ENCODE measurements at regions of chr19 and their contacts with region 1.

Region 1: GRCh38 chr19:35013031-35013819 is 13.1 kb downstream of the GRAMD1A start:
- DNase-seq: peak; percentile 82
- ATAC-seq: peak; percentile 67
- H3K4me3 Mint-ChIP-seq: peak overlapping the region; percentile 56
- H3K27ac Mint-ChIP-seq: peak overlapping the region; percentile 83
- H3K4me1 Mint-ChIP-seq: peaks cover 65% of the 10 kb centered on the region
- H3K27me3 Mint-ChIP-seq: no peaks in the 10 kb centered on the region

Region 2: DNA sequence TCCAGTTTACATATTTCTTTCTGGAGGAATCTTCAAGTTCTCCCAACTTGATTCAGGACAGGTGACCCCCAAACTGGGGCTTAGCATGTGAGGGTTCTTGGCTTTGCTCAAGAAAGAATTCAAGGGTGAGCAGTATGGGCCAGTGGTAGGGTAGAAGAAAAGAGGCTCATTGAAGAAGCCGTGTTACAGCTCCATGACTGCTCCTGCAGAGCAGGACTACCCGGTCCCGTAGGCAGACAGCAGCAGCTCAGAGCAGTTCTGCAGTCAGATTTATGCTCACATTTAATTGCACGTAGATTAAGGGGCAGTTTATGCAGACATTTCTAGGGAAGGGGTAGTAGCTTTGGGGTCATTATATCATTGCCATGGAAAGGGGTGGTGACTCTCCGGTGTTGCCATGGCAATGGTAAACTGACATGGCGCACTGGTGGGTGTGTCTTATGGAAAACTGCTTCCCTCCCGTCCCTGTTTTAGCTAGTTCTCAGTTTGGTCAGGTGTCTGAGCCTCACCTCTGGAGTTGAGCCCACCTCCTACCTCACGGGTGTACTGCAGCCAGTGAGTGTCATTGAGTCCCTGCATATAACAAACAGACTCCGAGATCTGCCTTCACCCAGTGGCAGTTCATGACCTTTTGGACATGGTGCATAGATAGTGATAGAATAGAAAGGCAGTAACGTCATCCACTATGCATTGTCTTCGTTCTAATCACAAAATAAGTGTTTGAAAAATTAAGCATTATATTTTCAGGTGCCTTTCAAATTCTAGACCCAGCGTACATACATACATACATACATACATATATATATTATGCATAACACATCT is 33.2 kb before region 1 on chr19:
- CTCF ChIA-PET with region 1: interaction called, 126 read pairs
- POLR2A ChIA-PET with region 1: interaction called, 12 read pairs
- DNase-seq: no peak
- ATAC-seq: no peak
- H3K4me3 Mint-ChIP-seq: no peak overlapping the region
- H3K27ac Mint-ChIP-seq: no peak overlapping the region
- H3K4me1 Mint-ChIP-seq: peaks cover 4% of the 10 kb centered on the region
- H3K27me3 Mint-ChIP-seq: peaks cover 2% of the 10 kb centered on the region

Region 3: GRCh38 chr19:34985249-34986022 is 27.8 kb before region 1 on chr19:
- CTCF ChIA-PET with region 1: interaction called, 25 read pairs
- POLR2A ChIA-PET with region 1: interaction called, 12 read pairs
- DNase-seq: peak; percentile 58
- ATAC-seq: peak; percentile 88
- H3K4me3 Mint-ChIP-seq: peak overlapping the region; percentile 46
- H3K27ac Mint-ChIP-seq: peak overlapping the region; percentile 75
- H3K4me1 Mint-ChIP-seq: peaks cover 10% of the 10 kb centered on the region
- H3K27me3 Mint-ChIP-seq: no peaks in the 10 kb centered on the region

Region 4: GRCh38 chr19:34999498-35000341 is 13.5 kb before region 1 on chr19 and contains the start of gene GRAMD1A:
- CTCF ChIA-PET with region 1: interaction called, 41 read pairs
- POLR2A ChIA-PET with region 1: interaction called, 7 read pairs
- DNase-seq: peak; percentile 78
- ATAC-seq: peak; percentile 51
- H3K4me3 Mint-ChIP-seq: peak within 1 kb of the TSS; percentile 87
- H3K27ac Mint-ChIP-seq: peak within 1 kb of the TSS; percentile 95
- H3K4me1 Mint-ChIP-seq: peaks cover 64% of the 10 kb centered on the region
- H3K27me3 Mint-ChIP-seq: no peaks in the 10 kb centered on the region
- total RNA-seq, gene GRAMD1A: 76.2 to 81.8 TPM

Region 5: GRCh38 chr19:35055715-35056179 is 42.5 kb after region 1 on chr19:
- CTCF ChIA-PET with region 1: no interaction called
- POLR2A ChIA-PET with region 1: no interaction called
- DNase-seq: peak; percentile 31
- ATAC-seq: peak; percentile 53
- H3K4me3 Mint-ChIP-seq: no peak overlapping the region
- H3K27ac Mint-ChIP-seq: no peak overlapping the region
- H3K4me1 Mint-ChIP-seq: no peaks in the 10 kb centered on the region
- H3K27me3 Mint-ChIP-seq: no peaks in the 10 kb centered on the region

Region 6: GRCh38 chr19:35076657-35077056 is 63.4 kb after region 1 on chr19:
- CTCF ChIA-PET with region 1: no interaction called
- POLR2A ChIA-PET with region 1: no interaction called
- DNase-seq: no peak
- ATAC-seq: no peak
- H3K4me3 Mint-ChIP-seq: no peak overlapping the region
- H3K27ac Mint-ChIP-seq: no peak overlapping the region
- H3K4me1 Mint-ChIP-seq: peaks cover 3% of the 10 kb centered on the region
- H3K27me3 Mint-ChIP-seq: peaks cover 7% of the 10 kb centered on the region

Region 7: DNA sequence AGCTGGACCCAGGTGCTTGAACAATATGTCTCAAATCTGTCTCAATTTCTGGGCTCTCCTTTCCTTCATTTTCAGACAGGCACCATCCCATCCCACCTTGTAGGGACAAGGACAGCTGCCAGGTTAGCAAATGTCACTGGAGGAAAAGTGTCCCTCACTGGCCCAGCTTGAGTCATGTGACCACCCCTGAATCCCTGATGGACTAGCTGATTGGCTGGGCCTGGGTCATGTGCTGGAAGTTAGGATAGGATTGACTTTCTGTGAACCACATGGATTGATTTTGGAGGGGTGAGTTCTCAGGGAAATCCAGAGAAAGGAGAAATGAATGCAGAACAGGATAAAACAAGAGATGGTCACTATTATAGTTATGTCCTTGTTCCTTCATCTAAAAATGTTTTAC is 74.2 kb after region 1 on chr19:
- CTCF ChIA-PET with region 1: no interaction called
- POLR2A ChIA-PET with region 1: no interaction called
- DNase-seq: no peak
- ATAC-seq: no peak
- H3K4me3 Mint-ChIP-seq: no peak overlapping the region
- H3K27ac Mint-ChIP-seq: no peak overlapping the region
- H3K4me1 Mint-ChIP-seq: peaks cover 12% of the 10 kb centered on the region
- H3K27me3 Mint-ChIP-seq: no peaks in the 10 kb centered on the region

Region 8: DNA sequence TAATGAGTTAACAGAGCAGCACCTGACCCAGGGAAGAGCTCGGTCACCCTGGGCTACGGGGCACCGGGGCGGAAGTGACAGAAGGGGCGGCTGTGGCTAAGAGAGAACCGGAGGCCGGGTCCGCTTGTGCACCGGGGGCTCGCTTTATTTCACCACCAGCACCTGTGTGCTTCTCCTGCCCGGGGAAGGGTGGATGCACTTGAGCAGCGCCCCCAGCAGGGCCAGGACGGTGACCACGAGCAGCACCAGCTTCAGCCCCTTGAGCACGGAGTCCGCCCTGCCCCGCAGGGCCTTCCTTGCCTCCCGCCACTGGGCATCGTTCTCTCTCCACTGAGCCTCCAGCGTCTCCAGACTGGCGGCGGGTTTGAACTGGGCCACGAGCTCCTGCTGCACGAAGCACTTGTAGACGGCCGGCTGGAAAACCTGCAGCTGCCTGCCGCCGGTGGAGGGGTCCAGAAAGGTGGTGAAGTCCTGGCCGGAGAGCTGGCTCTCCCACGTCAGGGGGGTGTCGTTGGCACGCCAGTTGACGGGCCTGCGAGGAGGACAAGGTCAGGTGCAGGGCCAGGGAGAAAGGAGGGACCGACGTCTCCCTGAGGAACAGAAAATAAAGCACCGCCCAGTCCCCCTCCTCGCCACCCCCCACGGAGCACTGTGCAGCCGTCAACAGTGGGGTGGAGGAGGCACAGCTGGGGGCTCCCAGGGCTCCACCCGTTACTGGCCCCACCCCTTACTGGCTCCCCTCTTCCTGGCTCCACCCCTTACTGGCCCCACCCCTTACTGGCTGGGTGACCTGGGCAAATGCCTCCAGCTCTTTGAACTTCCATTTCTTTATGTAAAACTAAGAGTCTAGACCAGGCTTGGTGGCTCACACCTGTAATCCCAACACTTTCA is 211.7 kb after region 1 on chr19:
- CTCF ChIA-PET with region 1: no interaction called
- POLR2A ChIA-PET with region 1: no interaction called
- DNase-seq: no peak
- ATAC-seq: no peak
- H3K4me3 Mint-ChIP-seq: no peak overlapping the region
- H3K27ac Mint-ChIP-seq: no peak overlapping the region
- H3K4me1 Mint-ChIP-seq: peaks cover 3% of the 10 kb centered on the region
- H3K27me3 Mint-ChIP-seq: no peaks in the 10 kb centered on the region

Measured in activated CD8-positive, alpha-beta T cell treated with anti-CD3 and anti-CD28 coated beads, Interleukin-2, amount 10 ng/mL, durations not matched to agents 7 days and 5 days (primary cell).